ENCODE measurements at regions of chr9 and their contacts with region 1.

Region 1: DNA sequence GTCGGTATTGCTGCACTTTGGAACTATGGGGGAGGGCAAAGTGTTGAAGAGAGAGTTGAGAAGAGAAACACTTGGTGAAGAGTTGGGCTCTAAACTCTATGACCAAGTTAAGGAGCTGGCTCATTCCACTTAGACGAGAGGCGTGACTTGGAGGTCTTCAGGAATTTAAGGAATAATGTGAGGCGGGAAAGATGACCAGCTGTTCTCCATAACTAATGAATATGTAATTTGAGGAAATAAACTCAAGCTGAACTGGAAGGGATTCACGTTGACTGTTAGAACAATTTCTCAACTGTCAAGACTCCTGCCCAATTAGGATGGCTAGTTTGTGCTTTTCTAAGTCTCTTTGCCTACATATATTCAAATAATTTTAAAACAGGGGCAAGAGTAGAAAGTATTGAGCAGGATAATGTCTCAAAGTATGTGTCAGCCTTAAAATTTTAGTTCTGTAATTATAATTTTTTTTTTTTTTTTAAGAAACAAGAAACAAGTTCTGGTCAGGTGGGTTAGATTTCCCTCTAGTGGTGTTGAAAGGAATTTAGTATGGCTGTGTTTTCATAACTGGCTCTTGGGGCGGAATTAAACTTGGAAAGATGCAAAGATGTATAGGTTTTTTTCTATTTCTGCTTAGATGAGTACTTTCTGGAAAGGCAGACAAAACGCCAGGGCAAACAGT is 33.4 kb downstream of the TMEM252 start:
- DNase-seq: no peak
- H3K4me3 ChIP-seq: no peak overlapping the region
- H3K27ac ChIP-seq: no peak overlapping the region
- H3K4me1 ChIP-seq: no peaks in the 10 kb centered on the region
- H3K27me3 ChIP-seq: no peaks in the 10 kb centered on the region
- CTCF ChIP-seq: peak; percentile 58

Region 2: DNA sequence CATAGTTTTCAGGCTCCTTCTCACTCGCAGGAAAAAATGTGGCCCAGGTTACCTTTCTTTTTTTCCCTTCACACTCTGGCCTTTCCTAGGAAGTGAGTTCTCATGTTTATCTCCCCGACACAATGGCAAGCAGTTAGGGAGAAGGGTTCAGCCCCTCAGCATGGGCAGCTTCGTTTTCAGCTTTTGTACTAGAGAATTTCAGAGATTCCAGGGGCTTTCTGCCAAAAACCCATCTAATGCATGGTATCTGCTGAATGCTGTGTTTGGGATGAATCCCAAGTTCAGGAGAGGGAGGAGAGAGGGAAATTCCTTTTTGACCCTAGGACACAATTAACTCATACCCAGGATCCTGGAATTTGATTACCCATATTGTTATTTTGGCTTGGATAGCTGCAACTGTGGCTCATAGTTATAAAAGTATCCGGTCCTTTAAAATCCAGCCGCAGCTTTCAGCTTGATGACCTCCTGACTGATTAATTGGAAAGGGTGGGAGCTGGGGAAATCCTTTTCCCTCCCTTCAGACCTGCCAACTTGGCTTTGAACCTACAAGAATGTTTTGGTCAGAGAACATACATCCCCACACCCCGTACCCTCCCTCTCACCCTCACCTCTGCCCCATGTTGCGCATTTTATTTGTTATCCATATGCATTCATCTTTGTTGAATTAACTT is 45.0 kb before region 1 on chr9:
- intact Hi-C with region 1: no loop called
- DNase-seq: no peak
- H3K4me3 ChIP-seq: no peak overlapping the region
- H3K27ac ChIP-seq: no peak overlapping the region
- H3K4me1 ChIP-seq: no peaks in the 10 kb centered on the region
- H3K27me3 ChIP-seq: no peaks in the 10 kb centered on the region
- CTCF ChIP-seq: no peak

Region 3: GRCh38 chr9:68567565-68567964 is 60.3 kb after region 1 on chr9:
- intact Hi-C with region 1: loop called (anchors 5 kb)
- DNase-seq: no peak
- H3K4me3 ChIP-seq: no peak overlapping the region
- H3K27ac ChIP-seq: no peak overlapping the region
- H3K4me1 ChIP-seq: no peaks in the 10 kb centered on the region
- H3K27me3 ChIP-seq: no peaks in the 10 kb centered on the region
- CTCF ChIP-seq: no peak

Measured in colonic mucosa (tissue), 4 donors.